ENCODE measurements at regions of chr11 and their contacts with region 1.

Region 1: DNA sequence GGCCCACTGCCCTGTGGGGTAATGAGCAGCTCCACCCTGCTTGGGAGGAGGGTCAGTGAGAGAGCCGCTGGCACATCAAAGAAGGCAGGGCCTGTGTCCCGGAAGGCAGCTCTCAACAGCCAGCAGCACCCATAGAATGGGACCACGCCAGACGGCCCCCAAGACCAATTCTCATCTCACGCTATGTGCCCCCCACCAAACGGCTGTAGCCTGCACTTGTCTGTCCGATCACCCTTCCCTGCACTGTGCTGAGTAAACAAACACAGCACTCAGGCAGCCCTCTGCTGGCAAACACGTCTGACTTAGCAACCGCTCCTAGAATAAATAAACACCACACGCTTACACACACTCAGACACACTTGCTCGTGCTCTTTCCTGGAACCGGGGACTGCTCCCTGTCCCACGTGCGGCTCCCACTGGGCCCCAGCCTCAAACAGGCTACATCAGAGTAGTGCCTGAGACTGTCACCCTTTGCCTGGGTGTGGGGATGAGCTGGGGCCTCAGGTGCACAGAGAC is 53.2 kb upstream of the CDON start:
- DNase-seq: peak; percentile 59 to 85
- H3K4me3 ChIP-seq: no peak overlapping the region
- H3K27ac ChIP-seq: peak overlapping the region; percentile 74 to 76
- H3K4me1 ChIP-seq: peaks cover 20 to 44% of the 10 kb centered on the region in 2 donors
- H3K27me3 ChIP-seq: no peaks in the 10 kb centered on the region
- CTCF ChIP-seq: peak in 1 of 3 experiments; percentile 22

Region 2: GRCh38 chr11:125164422-125165110 is 951.3 kb before region 1 on chr11 and contains the start of gene PKNOX2:
- intact Hi-C with region 1: loop called (anchors 10 kb)
- DNase-seq: peak in 1 of 2 donors; percentile 83
- H3K4me3 ChIP-seq: peak within 1 kb of the TSS; percentile 52 to 82
- H3K27ac ChIP-seq: peak within 1 kb of the TSS; percentile 80 to 91
- H3K4me1 ChIP-seq: peaks cover 8 to 26% of the 10 kb centered on the region in 2 donors
- H3K27me3 ChIP-seq: no peaks in the 10 kb centered on the region
- CTCF ChIP-seq: peak; percentile 40 to 85 (median 73)
- total RNA-seq, gene PKNOX2: 12.1 TPM

Region 3: GRCh38 chr11:125902927-125903710 is 212.8 kb before region 1 on chr11 and contains the start of gene PUS3:
- intact Hi-C with region 1: loop called (anchors 5 kb)
- DNase-seq: peak; percentile 62 to 95
- H3K4me3 ChIP-seq: peak within 1 kb of the TSS; percentile 61 to 63
- H3K27ac ChIP-seq: peak within 1 kb of the TSS; percentile 66 to 83
- H3K4me1 ChIP-seq: peaks cover 2 to 8% of the 10 kb centered on the region in 2 donors
- H3K27me3 ChIP-seq: peaks cover 5% of the 10 kb centered on the region
- CTCF ChIP-seq: no peak
- total RNA-seq, gene PUS3: 31.3 TPM

Region 4: GRCh38 chr11:126140932-126141291 is 25.0 kb after region 1 on chr11:
- intact Hi-C with region 1: no loop called
- DNase-seq: no peak
- H3K4me3 ChIP-seq: peak overlapping the region in 1 of 2 donors; percentile 39
- H3K27ac ChIP-seq: no peak overlapping the region
- H3K4me1 ChIP-seq: peaks cover 0 to 9% of the 10 kb centered on the region in 2 donors
- H3K27me3 ChIP-seq: no peaks in the 10 kb centered on the region
- CTCF ChIP-seq: no peak

Region 5: DNA sequence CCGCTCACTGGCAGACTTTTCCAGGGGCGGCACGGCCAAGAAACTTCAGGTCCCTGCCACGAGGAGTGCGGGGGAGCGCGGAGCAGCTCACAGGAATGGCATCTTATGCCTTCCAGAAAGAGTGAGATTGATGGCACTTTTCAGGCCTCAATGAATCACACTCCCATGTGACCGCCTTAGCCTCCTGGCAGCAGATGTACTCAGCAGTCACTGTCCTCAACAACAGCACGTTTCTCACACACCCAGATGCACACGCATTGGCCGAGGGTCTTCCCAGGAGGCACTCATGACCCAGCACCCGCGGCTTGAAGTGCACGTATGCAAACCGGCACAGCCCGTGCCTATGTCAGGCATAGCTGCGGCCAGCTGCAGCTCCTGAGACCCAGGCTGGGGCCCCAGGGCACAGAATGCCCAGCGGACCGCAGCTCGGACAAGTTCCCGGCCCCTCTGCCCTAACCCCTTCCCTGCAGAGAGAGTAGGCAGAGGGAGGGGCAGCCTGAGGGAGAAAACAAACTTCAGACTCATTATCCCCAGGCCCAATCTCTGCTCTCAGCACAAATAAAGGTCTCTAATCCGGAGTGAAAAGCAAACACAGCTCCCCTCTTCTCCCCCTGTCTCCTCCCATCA is 47.3 kb after region 1 on chr11:
- intact Hi-C with region 1: no loop called
- DNase-seq: peak in 1 of 2 donors; percentile 67
- H3K4me3 ChIP-seq: peak overlapping the region in 1 of 2 donors; percentile 19
- H3K27ac ChIP-seq: no peak overlapping the region
- H3K4me1 ChIP-seq: no peaks in the 10 kb centered on the region
- H3K27me3 ChIP-seq: no peaks in the 10 kb centered on the region
- CTCF ChIP-seq: no peak

Region 6: GRCh38 chr11:126211235-126212088 is 95.6 kb after region 1 on chr11 and contains the starts of genes FAM118B and RPUSD4:
- intact Hi-C with region 1: loop called (anchors 2 kb)
- DNase-seq: peak; percentile 90 to 99
- H3K4me3 ChIP-seq: peak within 1 kb of the TSS; percentile 78 to 89
- H3K27ac ChIP-seq: peak within 1 kb of the TSS; percentile 6 to 42
- H3K4me1 ChIP-seq: peaks cover 0 to 5% of the 10 kb centered on the region in 2 donors
- H3K27me3 ChIP-seq: no peaks in the 10 kb centered on the region
- CTCF ChIP-seq: no peak
- total RNA-seq, gene FAM118B: 14.0 TPM
- total RNA-seq, gene RPUSD4: 7.3 TPM

Region 7: DNA sequence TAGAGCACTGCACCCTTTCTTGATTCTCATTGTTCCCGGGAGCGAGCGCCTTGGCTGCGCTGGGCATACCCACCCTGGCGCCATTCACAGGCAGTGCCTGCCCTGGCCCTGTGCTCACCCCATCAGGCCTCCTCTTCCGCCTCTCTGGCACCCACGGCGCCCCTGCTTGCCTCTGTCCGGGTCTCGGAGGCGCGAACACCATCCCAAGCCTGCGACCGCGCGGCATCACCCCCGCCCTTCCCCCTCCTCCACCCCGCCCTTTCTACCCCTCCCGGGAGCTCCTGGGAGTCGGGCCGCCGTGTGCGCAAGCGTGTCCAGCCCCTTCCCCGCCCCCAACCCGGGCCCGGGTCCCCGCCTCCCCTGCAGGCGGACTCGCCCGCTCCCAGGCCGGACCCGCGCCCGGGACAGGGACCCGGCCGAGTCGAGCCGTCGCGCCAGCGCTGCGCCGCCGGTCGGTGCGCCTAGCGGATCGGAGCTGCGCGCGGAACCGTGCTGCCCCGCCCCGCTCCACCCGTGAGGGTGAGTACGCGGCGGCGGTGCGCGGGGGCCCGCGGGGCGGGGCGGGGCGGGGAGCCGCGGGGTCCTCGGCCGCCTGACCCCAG is 239.6 kb after region 1 on chr11 and contains the start of gene ST3GAL4:
- intact Hi-C with region 1: loop called (anchors 10 kb)
- DNase-seq: peak in 1 of 2 donors; percentile 83
- H3K4me3 ChIP-seq: peak within 1 kb of the TSS; percentile 84 to 88
- H3K27ac ChIP-seq: peak within 1 kb of the TSS; percentile 80 to 86
- H3K4me1 ChIP-seq: peaks cover 22 to 53% of the 10 kb centered on the region in 2 donors
- H3K27me3 ChIP-seq: no peaks in the 10 kb centered on the region
- CTCF ChIP-seq: no peak
- total RNA-seq, gene ST3GAL4: 61.4 TPM